Activated CD8-positive, alpha-beta T cell treated with anti-CD3 and anti-CD28 coated beads for 36 hours (primary cell): ENCODE measurements at regions of chr15 and their contacts with region 1.

Region 1: DNA sequence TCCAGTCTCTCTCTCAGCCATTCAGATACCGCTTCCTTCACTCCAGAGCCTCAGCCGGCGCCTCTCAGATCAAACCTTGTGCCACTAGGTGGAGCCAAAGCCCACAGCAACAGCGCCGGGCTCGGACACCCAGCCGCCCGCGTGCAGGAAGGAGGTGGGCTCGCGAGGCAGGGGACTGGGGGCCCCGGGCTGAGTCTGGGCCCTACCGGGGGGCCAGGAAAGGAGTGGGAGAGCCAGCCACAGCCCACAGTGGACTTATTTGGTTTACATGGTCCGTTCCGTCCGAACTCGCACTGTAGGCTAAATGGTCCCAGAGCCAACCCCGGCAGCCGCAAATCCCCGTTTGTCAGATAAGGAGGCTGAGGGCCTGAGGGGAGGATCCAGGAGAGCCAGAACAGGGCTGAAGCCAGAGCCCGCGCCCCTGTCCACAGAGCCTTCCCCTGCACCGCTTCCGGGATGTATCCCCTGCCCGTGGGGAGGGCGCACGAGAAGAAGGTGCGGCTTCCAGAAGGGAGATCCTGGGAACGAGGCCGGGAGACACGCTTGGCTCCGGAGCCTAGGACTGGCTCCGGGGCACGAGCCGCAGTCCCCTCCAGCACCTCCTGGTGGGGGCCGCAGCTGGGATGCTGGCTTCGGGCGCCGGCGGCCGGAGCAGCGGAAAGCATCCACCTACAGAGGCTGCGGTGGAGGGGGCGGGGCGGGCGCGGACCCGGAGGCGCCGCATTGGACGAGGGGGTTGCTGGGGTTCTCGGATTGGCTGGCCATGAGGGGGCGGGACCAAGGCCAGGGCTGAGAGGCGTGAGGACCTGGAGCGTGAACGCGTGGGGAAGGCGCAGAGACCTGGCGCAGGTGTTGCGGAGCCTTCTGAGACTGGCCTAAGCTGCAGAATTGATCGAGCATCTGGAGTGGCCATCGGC is 6.5 kb upstream of the CYP11A1 start:
- DNase-seq: peak; percentile 97
- ATAC-seq: peak; percentile 90
- H3K4me3 Mint-ChIP-seq: peak overlapping the region; percentile 74
- H3K27ac Mint-ChIP-seq: peak overlapping the region; percentile 63
- H3K4me1 Mint-ChIP-seq: peaks cover 39% of the 10 kb centered on the region
- H3K27me3 Mint-ChIP-seq: peaks cover 6% of the 10 kb centered on the region
- CTCF ChIP-seq: peak; percentile 92

Region 2: DNA sequence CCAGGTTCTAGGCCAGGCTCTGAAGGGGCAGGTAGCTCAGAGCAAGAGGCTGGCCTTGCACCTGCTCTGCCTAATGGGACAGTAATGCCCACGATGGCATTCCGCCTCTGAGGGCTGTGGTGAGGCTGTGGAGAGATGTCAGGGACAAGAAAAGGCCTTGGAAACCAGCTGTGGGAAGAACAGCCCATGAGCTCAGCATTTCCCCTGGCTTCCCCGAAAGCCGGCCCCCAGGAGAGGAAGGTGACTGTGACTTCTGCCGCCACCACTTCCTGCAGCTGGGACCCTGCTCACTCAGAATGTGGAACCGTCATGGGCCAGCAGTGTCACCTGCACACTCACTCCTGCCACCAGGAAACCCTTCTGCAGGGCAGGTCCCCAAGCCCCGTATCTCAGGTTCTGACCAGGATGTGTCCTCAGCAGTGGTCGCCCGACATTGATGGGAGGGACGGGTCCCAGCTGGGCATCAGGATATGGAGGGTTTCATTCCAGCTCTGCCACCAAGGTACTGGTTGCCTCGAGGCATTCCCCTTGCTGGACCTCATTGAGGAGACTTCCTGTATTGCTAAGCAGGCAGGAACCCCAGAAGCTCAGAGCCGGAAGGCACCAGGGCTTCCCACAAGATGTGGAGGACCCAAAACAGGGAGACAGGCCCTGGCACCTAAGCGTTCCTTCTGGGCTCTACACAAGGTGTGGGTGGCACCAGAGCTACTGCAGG is 29.0 kb after region 1 on chr15:
- CTCF ChIA-PET with region 1: interaction called, 18 read pairs
- POLR2A ChIA-PET with region 1: interaction called, 4 read pairs
- intact Hi-C with region 1: no loop called
- DNase-seq: peak; percentile 96
- ATAC-seq: peak; percentile 67
- H3K4me3 Mint-ChIP-seq: peak overlapping the region; percentile 63
- H3K27ac Mint-ChIP-seq: peak overlapping the region; percentile 84
- H3K4me1 Mint-ChIP-seq: peaks cover 82% of the 10 kb centered on the region
- H3K27me3 Mint-ChIP-seq: no peaks in the 10 kb centered on the region
- CTCF ChIP-seq: no peak

Region 3: GRCh38 chr15:74438721-74439316 is 64.8 kb after region 1 on chr15:
- CTCF ChIA-PET with region 1: interaction called, 840 read pairs
- POLR2A ChIA-PET with region 1: interaction called, 9 read pairs
- intact Hi-C with region 1: loop called (anchors 2 kb)
- DNase-seq: peak; percentile 88
- ATAC-seq: peak; percentile 78
- H3K4me3 Mint-ChIP-seq: no peak overlapping the region
- H3K27ac Mint-ChIP-seq: no peak overlapping the region
- H3K4me1 Mint-ChIP-seq: peaks cover 32% of the 10 kb centered on the region
- H3K27me3 Mint-ChIP-seq: no peaks in the 10 kb centered on the region
- CTCF ChIP-seq: peak; percentile 87

Region 4: DNA sequence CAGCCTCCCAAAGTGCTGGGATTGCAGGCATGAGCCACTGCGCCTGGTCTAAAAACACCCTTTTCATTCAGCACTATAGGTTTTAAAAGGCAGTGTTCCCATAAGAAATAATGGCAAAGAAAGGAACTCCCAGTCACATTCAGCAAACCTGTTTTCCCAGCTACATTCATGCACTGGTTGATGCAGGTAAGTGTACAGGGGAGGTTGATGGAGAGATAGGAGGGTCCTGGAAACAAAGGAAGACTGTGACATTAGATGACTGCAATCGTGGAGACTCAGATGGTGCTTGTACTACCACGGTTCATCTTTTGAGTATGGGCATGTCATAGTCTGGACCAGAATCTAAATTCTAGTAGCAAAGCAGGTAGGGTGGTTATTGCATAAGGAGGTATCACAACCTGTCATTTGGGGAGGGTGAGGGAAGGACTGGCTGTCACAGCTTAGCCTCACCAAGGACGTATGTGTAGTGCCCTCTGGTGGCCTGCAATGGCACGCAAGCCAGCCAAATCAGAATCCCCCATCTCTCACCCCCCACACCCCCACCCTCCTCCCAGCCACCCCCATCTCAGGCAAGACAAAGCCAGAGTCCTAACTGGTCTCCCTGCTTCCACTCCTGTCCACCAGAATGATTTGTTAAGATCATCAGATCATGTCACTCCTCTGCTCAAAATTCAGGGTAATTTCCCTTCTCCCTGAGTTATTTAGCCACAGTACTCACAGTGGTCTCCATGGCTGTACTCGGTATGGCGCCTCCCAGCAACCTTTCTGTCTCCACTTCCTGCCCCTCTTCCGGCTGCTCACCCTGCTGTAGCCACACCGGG is 115.7 kb after region 1 on chr15:
- CTCF ChIA-PET with region 1: interaction called, 8 read pairs
- POLR2A ChIA-PET with region 1: interaction called, 3 read pairs
- intact Hi-C with region 1: loop called (anchors 5 kb)
- DNase-seq: peak; percentile 90
- ATAC-seq: peak; percentile 97
- H3K4me3 Mint-ChIP-seq: peak overlapping the region; percentile 71
- H3K27ac Mint-ChIP-seq: peak overlapping the region; percentile 93
- H3K4me1 Mint-ChIP-seq: peaks cover 18% of the 10 kb centered on the region
- H3K27me3 Mint-ChIP-seq: no peaks in the 10 kb centered on the region
- CTCF ChIP-seq: peak; percentile 77

Region 5: GRCh38 chr15:74615508-74616365 is 241.7 kb after region 1 on chr15 and contains the start of gene CLK3:
- CTCF ChIA-PET with region 1: interaction called, 47 read pairs
- POLR2A ChIA-PET with region 1: interaction called, 6 read pairs
- intact Hi-C with region 1: no loop called
- DNase-seq: peak; percentile 97
- ATAC-seq: peak; percentile 88
- H3K4me3 Mint-ChIP-seq: peak within 1 kb of the TSS; percentile 92
- H3K27ac Mint-ChIP-seq: peak within 1 kb of the TSS; percentile 98
- H3K4me1 Mint-ChIP-seq: peaks cover 43% of the 10 kb centered on the region
- H3K27me3 Mint-ChIP-seq: no peaks in the 10 kb centered on the region
- CTCF ChIP-seq: no peak
- total RNA-seq, gene CLK3: 159 to 168 TPM